ENCODE measurements at regions of chr14 and their contacts with region 1.

Region 1: GRCh38 chr14:99408286-99408970 is 72.2 kb downstream of the SETD3 start:
- H3K4me3 ChIP-seq: no peak overlapping the region
- H3K27ac ChIP-seq: no peak overlapping the region
- H3K4me1 ChIP-seq: no peaks in the 10 kb centered on the region
- CTCF ChIP-seq: no peak

Region 2: DNA sequence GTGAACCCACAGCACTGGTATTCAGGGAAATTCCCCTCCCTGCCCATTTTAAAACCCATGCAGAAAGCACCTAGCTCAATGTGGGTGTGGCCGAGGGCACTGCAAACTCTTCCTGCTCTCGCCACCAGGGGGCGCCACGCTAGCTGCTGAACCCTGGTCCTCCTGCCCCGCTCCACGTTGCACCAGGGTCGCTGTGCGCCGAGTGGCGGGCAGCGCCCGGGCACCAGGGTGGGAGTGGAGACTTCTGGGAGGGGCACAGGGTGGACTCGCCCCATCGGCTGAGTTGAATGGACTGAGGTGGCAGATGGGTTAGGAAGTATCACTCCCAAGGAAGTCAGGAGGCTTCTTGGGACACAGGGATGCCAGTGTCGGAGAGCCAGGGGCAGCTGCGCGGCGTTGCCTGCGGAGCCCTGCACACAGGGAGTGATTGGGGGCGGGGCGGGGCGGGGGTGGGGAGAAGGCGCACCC is 88.3 kb before region 1 on chr14:
- CTCF ChIA-PET with region 1: interaction called, 13 read pairs
- POLR2A ChIA-PET with region 1: no interaction called
- H3K4me3 ChIP-seq: no peak overlapping the region; the same call in 1 of the 2 replicates
- H3K27ac ChIP-seq: no peak overlapping the region
- H3K4me1 ChIP-seq: no peaks in the 10 kb centered on the region
- CTCF ChIP-seq: peak; percentile 85

Region 3: GRCh38 chr14:99480917-99481744 is 72.7 kb after region 1 on chr14 and contains the start of gene CCNK:
- CTCF ChIA-PET with region 1: no interaction called
- POLR2A ChIA-PET with region 1: no interaction called
- H3K4me3 ChIP-seq: peak within 1 kb of the TSS; percentile 96
- H3K27ac ChIP-seq: peak within 1 kb of the TSS; percentile 88
- H3K4me1 ChIP-seq: peaks cover 10% of the 10 kb centered on the region
- CTCF ChIP-seq: no peak; the same call in 1 of the 2 replicates